B cell (primary cell): ENCODE measurements at regions of chr11 and their contacts with region 1.

Region 1: GRCh38 chr11:35082321-35083182 is 56.4 kb upstream of the CD44 start:
- DNase-seq: peak; percentile 91
- ATAC-seq: peak; percentile 63
- H3K4me3 ChIP-seq: peak overlapping the region in 3 of 5 experiments; percentile 29 to 55 (median 34)
- H3K4me3 Mint-ChIP-seq: peak overlapping the region; percentile 80
- H3K27ac ChIP-seq: peak overlapping the region; percentile 96
- H3K27ac Mint-ChIP-seq: peak overlapping the region; percentile 98
- H3K4me1 ChIP-seq: peaks cover 66 to 71% of the 10 kb centered on the region in 2 donors
- H3K4me1 Mint-ChIP-seq: peaks cover 85% of the 10 kb centered on the region
- H3K27me3 ChIP-seq: no peaks in the 10 kb centered on the region
- H3K27me3 Mint-ChIP-seq: no peaks in the 10 kb centered on the region
- CTCF ChIP-seq: no peak

Region 2: GRCh38 chr11:34599406-34599901 is 483.1 kb before region 1 on chr11:
- CTCF ChIA-PET with region 1: no interaction called
- POLR2A ChIA-PET with region 1: no interaction called
- intact Hi-C with region 1: no loop called
- DNase-seq: no peak
- ATAC-seq: no peak
- H3K4me3 ChIP-seq: no peak overlapping the region
- H3K4me3 Mint-ChIP-seq: no peak overlapping the region
- H3K27ac ChIP-seq: no peak overlapping the region
- H3K27ac Mint-ChIP-seq: no peak overlapping the region
- H3K4me1 ChIP-seq: no peaks in the 10 kb centered on the region
- H3K4me1 Mint-ChIP-seq: peaks cover 6% of the 10 kb centered on the region
- H3K27me3 ChIP-seq: no peaks in the 10 kb centered on the region
- H3K27me3 Mint-ChIP-seq: peaks cover 4% of the 10 kb centered on the region
- CTCF ChIP-seq: no peak

Region 3: DNA sequence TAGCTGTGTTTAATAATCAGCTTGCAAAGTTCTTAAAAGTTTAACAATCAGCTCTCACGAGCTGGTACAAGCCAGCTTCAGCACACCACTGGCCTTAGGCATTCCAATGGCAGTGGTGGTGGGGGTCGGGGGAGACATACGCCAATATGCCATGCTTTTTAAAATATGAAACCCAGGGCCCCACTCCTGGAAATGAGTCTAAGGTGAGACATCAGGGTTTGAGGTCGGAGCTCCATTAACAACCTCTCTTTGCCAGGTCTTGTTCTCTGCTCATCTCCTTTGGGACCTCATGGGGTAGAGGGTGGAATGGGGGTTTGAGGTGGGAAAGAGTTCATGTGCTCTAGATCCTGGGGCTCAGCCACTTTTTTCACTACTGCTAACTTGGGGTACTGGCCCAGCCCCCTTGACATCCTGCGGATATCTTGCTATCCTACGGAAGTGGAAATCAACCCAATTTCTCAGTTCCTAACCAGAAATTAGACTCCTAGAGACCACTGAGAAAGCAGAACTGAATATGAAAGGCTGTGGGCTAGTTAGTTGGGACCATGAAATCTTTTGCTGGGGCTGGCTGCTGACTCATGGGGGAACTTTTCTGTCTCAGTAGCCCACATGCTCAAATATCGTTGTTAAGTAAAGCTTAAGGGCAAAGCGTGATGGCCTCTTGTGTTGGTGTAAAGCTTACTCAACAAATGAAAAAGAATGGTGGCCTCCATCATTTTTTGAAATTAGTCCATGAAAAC is 76.0 kb before region 1 on chr11:
- CTCF ChIA-PET with region 1: interaction called, 7 read pairs
- POLR2A ChIA-PET with region 1: no interaction called
- intact Hi-C with region 1: loop called (anchors 1 kb)
- DNase-seq: peak; percentile 63
- ATAC-seq: peak; percentile 89
- H3K4me3 ChIP-seq: no peak overlapping the region
- H3K4me3 Mint-ChIP-seq: no peak overlapping the region
- H3K27ac ChIP-seq: no peak overlapping the region
- H3K27ac Mint-ChIP-seq: peak overlapping the region; percentile 50
- H3K4me1 ChIP-seq: peaks cover 6 to 10% of the 10 kb centered on the region in 2 donors
- H3K4me1 Mint-ChIP-seq: peaks cover 31% of the 10 kb centered on the region
- H3K27me3 ChIP-seq: no peaks in the 10 kb centered on the region
- H3K27me3 Mint-ChIP-seq: no peaks in the 10 kb centered on the region
- CTCF ChIP-seq: no peak

Region 4: GRCh38 chr11:35047179-35047578 is 35.4 kb before region 1 on chr11:
- CTCF ChIA-PET with region 1: interaction called, 4 read pairs
- POLR2A ChIA-PET with region 1: interaction called, 12 read pairs
- intact Hi-C with region 1: loop called (anchors 1 kb)
- DNase-seq: peak; percentile 85
- ATAC-seq: peak; percentile 53
- H3K4me3 ChIP-seq: no peak overlapping the region
- H3K4me3 Mint-ChIP-seq: peak overlapping the region; percentile 40
- H3K27ac ChIP-seq: peak overlapping the region; percentile 66 to 98
- H3K27ac Mint-ChIP-seq: peak overlapping the region; percentile 95
- H3K4me1 ChIP-seq: peaks cover 56 to 71% of the 10 kb centered on the region in 2 donors
- H3K4me1 Mint-ChIP-seq: peaks cover 69% of the 10 kb centered on the region
- H3K27me3 ChIP-seq: no peaks in the 10 kb centered on the region
- H3K27me3 Mint-ChIP-seq: no peaks in the 10 kb centered on the region
- CTCF ChIP-seq: no peak

Region 5: GRCh38 chr11:35114906-35115687 is 32.5 kb after region 1 on chr11:
- CTCF ChIA-PET with region 1: interaction called, 4 read pairs
- POLR2A ChIA-PET with region 1: interaction called, 3 read pairs
- intact Hi-C with region 1: loop called (anchors 1 kb)
- DNase-seq: peak; percentile 74
- ATAC-seq: peak; percentile 76
- H3K4me3 ChIP-seq: no peak overlapping the region
- H3K4me3 Mint-ChIP-seq: peak overlapping the region; percentile 54
- H3K27ac ChIP-seq: no peak overlapping the region
- H3K27ac Mint-ChIP-seq: peak overlapping the region; percentile 86
- H3K4me1 ChIP-seq: peaks cover 59 to 63% of the 10 kb centered on the region in 2 donors
- H3K4me1 Mint-ChIP-seq: peaks cover 82% of the 10 kb centered on the region
- H3K27me3 ChIP-seq: no peaks in the 10 kb centered on the region
- H3K27me3 Mint-ChIP-seq: no peaks in the 10 kb centered on the region
- CTCF ChIP-seq: no peak

Region 6: GRCh38 chr11:35144136-35144741 is 61.7 kb after region 1 on chr11:
- CTCF ChIA-PET with region 1: interaction called, 13 read pairs
- POLR2A ChIA-PET with region 1: interaction called, 7 read pairs
- intact Hi-C with region 1: loop called (anchors 1 kb)
- DNase-seq: peak; percentile 90
- ATAC-seq: peak; percentile 60
- H3K4me3 ChIP-seq: peak overlapping the region; percentile 1 to 89 (median 26)
- H3K4me3 Mint-ChIP-seq: peak overlapping the region; percentile 78
- H3K27ac ChIP-seq: peak overlapping the region; percentile 79 to 87
- H3K27ac Mint-ChIP-seq: peak overlapping the region; percentile 83
- H3K4me1 ChIP-seq: peaks cover 80 to 90% of the 10 kb centered on the region in 2 donors
- H3K4me1 Mint-ChIP-seq: peaks cover 80% of the 10 kb centered on the region
- H3K27me3 ChIP-seq: no peaks in the 10 kb centered on the region
- H3K27me3 Mint-ChIP-seq: no peaks in the 10 kb centered on the region
- CTCF ChIP-seq: peak; percentile 23

Region 7: DNA sequence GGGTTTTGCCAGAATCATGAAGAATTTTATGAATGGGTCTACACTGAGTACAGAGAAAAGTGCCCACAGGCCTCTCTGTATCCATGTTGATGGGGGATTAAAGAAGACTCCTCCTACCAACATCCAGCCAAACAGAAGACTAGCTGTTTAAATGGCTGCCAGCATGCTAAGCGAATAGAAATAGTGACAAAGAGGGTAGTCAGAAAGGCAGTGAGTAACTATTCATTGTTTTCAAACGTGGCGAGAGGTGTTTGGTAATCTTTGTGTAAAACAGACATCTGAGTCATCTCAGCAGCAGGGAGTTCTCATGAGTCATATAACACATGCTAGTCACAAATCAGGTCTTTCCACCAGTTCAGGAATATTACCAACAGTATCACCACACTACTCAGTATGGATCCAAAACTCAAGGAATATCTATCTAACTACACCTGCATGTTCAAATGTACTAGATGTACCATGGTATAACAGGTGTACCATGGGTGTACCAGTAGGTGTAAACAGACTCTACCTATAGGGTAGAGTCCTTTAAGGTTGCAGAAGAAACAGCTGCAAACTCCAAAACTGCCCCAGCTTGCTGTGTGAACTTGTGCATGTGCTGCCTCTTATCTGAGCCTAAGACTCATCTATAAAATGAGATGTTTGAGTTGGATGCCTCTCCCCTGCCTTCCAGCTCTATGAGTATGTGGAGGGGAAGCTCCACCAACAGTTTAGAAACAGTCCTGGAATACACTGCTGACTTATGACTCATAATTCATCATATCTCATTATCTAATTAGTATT is 254.8 kb after region 1 on chr11:
- CTCF ChIA-PET with region 1: no interaction called
- POLR2A ChIA-PET with region 1: no interaction called
- intact Hi-C with region 1: loop called (anchors 10 kb)
- DNase-seq: no peak
- ATAC-seq: no peak
- H3K4me3 ChIP-seq: no peak overlapping the region
- H3K4me3 Mint-ChIP-seq: no peak overlapping the region
- H3K27ac ChIP-seq: no peak overlapping the region
- H3K27ac Mint-ChIP-seq: no peak overlapping the region
- H3K4me1 ChIP-seq: peaks cover 14 to 26% of the 10 kb centered on the region in 2 donors
- H3K4me1 Mint-ChIP-seq: peaks cover 22% of the 10 kb centered on the region
- H3K27me3 ChIP-seq: no peaks in the 10 kb centered on the region
- H3K27me3 Mint-ChIP-seq: no peaks in the 10 kb centered on the region
- CTCF ChIP-seq: no peak